ENCODE measurements at regions of chr17 and their contacts with region 1.

Region 1: GRCh38 chr17:48892940-48893645 is 506 bp downstream of the ATP5MC1 start:
- DNase-seq: peak; percentile 24
- H3K4me3 Mint-ChIP-seq: peak overlapping the region; percentile 98
- H3K27ac Mint-ChIP-seq: peak overlapping the region; percentile 96
- H3K4me1 Mint-ChIP-seq: peaks cover 34% of the 10 kb centered on the region
- H3K27me3 Mint-ChIP-seq: no peaks in the 10 kb centered on the region

Region 2: GRCh38 chr17:48830840-48831548 is 62.1 kb before region 1 on chr17 and contains the start of gene CALCOCO2:
- CTCF ChIA-PET with region 1: no interaction called
- POLR2A ChIA-PET with region 1: no interaction called
- intact Hi-C with region 1: loop called (anchors 1 kb)
- DNase-seq: peak; percentile 93
- H3K4me3 Mint-ChIP-seq: peak within 1 kb of the TSS; percentile 94
- H3K27ac Mint-ChIP-seq: peak within 1 kb of the TSS; percentile 87
- H3K4me1 Mint-ChIP-seq: peaks cover 42% of the 10 kb centered on the region
- H3K27me3 Mint-ChIP-seq: no peaks in the 10 kb centered on the region
- total RNA-seq, gene CALCOCO2: 65.1 to 72.1 TPM

Region 3: GRCh38 chr17:48908047-48908843 is 15.2 kb after region 1 on chr17 and contains the start of gene UBE2Z:
- CTCF ChIA-PET with region 1: interaction called, 9 read pairs
- POLR2A ChIA-PET with region 1: interaction called, 68 read pairs
- intact Hi-C with region 1: loop called (anchors 1 kb)
- DNase-seq: peak; percentile 93
- H3K4me3 Mint-ChIP-seq: peak within 1 kb of the TSS; percentile 87
- H3K27ac Mint-ChIP-seq: peak within 1 kb of the TSS; percentile 97
- H3K4me1 Mint-ChIP-seq: peaks cover 43% of the 10 kb centered on the region
- H3K27me3 Mint-ChIP-seq: no peaks in the 10 kb centered on the region
- total RNA-seq, gene UBE2Z: 102 to 109 TPM

Region 4: GRCh38 chr17:48915459-48916282 is 22.6 kb after region 1 on chr17:
- CTCF ChIA-PET with region 1: no interaction called
- POLR2A ChIA-PET with region 1: interaction called, 68 read pairs
- intact Hi-C with region 1: loop called (anchors 1 kb)
- DNase-seq: peak; percentile 80
- H3K4me3 Mint-ChIP-seq: peak overlapping the region; percentile 76
- H3K27ac Mint-ChIP-seq: peak overlapping the region; percentile 95
- H3K4me1 Mint-ChIP-seq: peaks cover 61% of the 10 kb centered on the region
- H3K27me3 Mint-ChIP-seq: no peaks in the 10 kb centered on the region

Region 5: DNA sequence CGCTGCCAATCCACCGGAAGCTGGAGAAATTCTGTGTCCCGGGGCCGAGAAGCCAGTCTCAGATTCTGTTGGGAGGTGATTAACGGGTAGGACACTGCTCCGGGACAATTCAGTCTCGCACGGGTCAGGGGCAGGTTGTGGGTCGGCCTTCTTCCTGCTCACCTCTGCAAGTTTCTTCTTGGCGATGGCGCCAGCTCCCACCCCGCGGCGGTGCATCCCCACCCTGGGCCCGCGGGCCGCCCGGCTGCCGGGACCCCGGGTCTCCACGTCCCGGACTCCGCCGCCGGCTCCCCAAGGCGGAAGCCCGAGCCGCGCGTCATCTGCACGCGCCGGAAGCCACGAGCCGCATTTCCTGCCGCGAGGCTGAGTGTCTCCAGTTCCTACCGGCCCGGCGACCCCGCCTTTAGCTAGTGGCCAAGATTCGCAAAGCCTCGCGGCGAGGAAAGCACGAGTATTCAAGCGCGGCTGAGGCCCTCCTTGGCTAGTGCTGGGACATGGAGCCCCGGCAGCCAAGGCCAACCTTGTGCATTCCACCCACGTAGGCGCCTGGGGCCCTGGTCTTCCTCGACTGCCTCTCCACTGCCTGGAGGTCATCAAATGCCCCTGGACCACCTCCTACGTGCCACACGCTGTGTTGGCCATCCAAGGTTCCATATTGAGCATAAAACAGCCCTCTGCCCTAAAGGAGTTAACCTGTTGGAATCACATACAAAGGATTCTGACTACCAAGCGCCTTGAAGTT is 51.6 kb after region 1 on chr17 and contains the start of gene SNF8:
- CTCF ChIA-PET with region 1: no interaction called
- POLR2A ChIA-PET with region 1: interaction called, 16 read pairs
- intact Hi-C with region 1: loop called (anchors 1 kb)
- DNase-seq: peak; percentile 96
- H3K4me3 Mint-ChIP-seq: peak within 1 kb of the TSS; percentile 99
- H3K27ac Mint-ChIP-seq: peak within 1 kb of the TSS; percentile 88
- H3K4me1 Mint-ChIP-seq: peaks cover 14% of the 10 kb centered on the region
- H3K27me3 Mint-ChIP-seq: no peaks in the 10 kb centered on the region
- total RNA-seq, gene SNF8: 93.5 to 105 TPM

Region 6: DNA sequence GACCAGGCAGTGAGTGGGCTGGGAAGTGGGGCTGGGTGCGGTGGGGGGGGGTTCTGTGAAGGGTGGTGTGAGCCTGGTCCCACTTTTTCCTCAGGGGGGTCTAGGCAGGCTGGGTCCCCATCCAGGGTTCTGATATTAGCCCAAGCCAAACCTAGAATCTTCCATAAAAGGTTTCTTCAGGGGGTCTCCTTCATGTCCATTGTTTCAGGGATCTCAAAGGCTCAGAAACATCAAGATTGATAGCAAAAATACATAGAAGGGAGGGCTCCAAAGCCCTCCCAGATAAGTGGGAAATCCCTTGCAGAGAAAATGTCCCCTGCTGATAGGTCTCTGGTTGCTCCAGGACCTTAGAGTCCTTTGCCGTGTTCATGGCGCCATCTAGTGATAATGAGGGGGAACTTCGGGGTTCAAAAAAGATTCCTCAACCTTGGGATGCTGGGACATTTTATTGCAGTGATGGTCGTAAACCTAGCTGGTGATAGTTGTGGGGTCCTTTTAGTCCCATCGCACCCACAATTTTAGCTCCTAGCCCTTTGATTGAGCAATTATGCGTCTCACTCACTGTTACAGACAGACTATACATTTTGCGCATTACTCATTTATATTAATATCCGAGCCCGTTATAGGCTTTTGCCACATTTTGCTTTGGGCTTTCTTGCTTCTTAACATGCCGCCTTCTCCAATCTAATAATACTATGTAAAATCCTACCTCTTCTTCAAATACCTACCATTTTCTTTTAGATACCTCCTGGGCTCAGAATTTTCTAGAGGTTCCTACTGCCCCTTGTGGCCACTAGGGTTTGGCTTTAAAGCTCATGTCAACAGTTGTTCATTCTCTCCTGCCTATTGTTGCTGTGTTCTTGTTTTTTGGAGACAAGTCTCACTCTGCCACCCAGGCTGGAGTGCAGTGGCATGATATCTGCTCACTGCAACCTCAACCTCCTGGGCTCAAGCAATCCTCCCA is 139.2 kb after region 1 on chr17:
- CTCF ChIA-PET with region 1: interaction called, 11 read pairs
- POLR2A ChIA-PET with region 1: no interaction called
- intact Hi-C with region 1: no loop called
- DNase-seq: peak; percentile 55
- H3K4me3 Mint-ChIP-seq: no peak overlapping the region
- H3K27ac Mint-ChIP-seq: no peak overlapping the region
- H3K4me1 Mint-ChIP-seq: no peaks in the 10 kb centered on the region
- H3K27me3 Mint-ChIP-seq: peaks cover 3% of the 10 kb centered on the region

Region 7: DNA sequence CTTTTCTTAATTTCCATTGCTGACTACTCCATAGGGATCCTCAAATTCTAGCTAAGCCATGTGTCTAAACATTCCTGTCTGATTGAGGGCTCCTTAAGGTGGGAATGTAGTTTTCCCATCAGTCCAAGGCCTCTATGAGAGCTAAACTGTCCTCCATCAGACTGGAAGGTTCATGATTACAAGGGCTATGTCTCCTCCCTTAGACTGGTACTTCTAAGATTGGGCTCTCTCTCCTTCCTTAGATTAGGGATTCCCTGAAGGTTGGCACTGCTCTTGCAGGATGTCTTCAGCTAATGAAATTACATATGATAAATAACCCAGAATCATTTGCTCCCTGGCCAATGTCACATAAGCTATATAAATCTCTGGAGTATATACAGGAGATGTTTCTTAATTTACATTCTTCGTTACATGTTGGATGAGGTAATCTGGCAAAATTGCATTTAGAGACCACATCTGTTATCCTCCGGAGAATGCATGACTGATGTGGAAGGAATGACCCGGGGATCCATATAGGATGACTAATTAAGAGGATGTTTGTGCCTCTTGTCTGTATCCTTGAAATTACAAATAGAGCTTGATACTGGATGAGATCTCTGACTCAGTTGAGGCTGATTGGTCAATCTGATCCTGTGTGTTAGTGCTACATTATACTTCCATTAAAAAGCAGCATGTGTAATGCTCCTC is 253.7 kb after region 1 on chr17:
- CTCF ChIA-PET with region 1: no interaction called
- POLR2A ChIA-PET with region 1: no interaction called
- intact Hi-C with region 1: no loop called
- DNase-seq: no peak
- H3K4me3 Mint-ChIP-seq: no peak overlapping the region
- H3K27ac Mint-ChIP-seq: no peak overlapping the region
- H3K4me1 Mint-ChIP-seq: no peaks in the 10 kb centered on the region
- H3K27me3 Mint-ChIP-seq: peaks cover 25% of the 10 kb centered on the region

Measured in activated CD4-positive, alpha-beta memory T cell treated with anti-CD3 and anti-CD28 coated beads for 36 hours (primary cell).